Left cardiac atrium (tissue), 4 donors: ENCODE measurements at regions of chr7 and their contacts with region 1.

Region 1: DNA sequence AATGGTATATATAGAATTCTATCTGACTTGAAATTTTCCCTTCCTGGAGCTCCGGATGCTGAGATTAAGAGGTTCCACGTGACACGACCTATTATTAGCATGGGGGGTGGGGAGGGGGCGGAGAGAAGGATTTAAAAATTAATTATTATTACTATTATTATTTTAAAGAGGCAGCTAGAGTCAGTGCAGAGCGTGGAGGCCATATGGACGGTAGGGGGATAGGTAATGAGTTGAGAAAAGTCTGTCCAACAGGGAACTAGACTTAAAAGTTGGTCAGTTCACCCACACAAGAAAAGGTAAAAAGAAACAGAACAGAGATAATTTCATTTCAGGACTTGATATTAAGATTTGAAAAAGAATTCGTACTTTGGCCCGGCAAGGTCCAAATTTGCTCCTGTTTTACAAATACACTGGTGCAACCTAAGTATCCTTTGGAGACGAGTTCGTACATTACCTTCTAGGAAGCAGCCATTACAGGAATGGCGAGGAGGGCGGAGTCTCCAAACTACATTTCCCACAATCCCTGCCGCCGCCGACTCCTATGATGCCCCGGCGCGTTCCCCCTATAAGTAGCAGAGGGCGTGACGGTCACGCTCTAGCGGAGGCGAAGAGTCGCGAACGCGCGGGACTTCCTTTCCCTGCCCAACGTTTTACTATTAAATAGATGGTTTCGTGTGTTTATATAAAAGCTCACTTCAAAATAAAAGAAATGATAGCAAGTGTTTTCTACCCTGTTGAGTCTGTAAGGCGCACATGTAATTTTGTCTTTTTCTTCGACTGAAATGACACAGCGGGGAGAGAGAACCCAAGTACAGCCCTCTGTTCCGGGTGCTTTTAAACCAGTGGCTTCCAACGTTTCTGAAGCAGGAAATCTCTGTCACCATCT is at the start of gene SMIM30:
- DNase-seq: peak; percentile 95
- ATAC-seq: peak; percentile 100
- total RNA-seq, gene SMIM30: 78.1 to 85.9 TPM

Region 2: DNA sequence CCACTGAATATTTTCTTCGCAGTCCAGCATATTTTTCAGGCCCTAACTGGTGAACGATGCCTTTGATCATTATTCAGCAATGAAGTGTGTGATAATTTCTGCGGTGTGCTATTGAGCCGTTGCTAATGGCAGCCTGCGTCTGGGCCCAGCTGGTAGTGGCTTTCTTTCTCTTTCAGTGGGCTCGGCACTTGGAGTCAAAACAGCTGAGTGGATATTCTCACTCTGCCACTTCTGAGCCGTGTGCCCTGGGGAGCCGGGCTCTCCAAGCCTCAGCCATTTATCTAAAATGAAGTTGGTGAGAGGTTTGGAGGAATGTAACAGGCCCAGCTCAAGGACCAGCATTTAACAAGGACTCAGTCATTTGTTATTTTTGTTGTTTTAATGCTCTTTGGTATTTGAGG is 755.6 kb before region 1 on chr7:
- intact Hi-C with region 1: no loop called
- DNase-seq: no peak
- ATAC-seq: peak; percentile 51 to 52

Region 3: GRCh38 chr7:112939574-112940314 is 178.6 kb before region 1 on chr7:
- intact Hi-C with region 1: loop called in 1 of 2 experiments (anchors 10 kb)
- DNase-seq: peak; percentile 99
- ATAC-seq: peak; percentile 98 to 99

Region 4: DNA sequence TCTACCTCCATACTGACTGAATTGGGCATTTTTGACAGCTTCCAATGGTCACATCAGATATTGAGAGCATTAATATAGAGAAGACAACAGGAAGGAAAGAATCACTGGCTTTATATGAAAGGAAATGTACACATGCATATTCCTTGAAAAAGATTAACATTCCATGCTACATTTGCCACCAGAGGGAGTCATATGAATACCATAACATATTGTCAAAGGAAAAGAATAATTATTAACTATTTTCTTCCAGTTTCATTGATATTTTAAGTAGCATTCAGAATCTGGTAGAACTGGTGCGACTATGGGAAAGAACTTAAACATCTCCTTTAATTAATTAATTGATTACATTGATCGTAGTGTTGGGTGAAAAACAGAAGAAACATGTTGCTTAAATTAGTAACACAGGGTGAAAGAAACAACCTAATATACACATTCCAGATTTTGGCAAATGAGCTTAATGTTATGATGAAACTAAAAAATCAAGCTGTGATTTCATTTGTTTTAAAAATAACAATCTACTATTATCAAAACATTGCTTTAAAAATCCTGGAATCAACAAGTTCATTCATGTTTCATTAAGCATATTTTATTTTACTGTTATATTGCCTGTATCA is 103.2 kb before region 1 on chr7:
- intact Hi-C with region 1: loop called in 1 of 2 experiments (anchors 10 kb)
- DNase-seq: no peak
- ATAC-seq: no peak